AG04450 (cell line): ENCODE measurements at regions of chr3 and their contacts with region 1.

Region 1: GRCh38 chr3:123535580-123535979 is 49.3 kb downstream of the HACD2 start:
- DNase-seq: no peak
- H3K4me3 ChIP-seq: no peak overlapping the region
- H3K27ac ChIP-seq: no peak overlapping the region
- H3K27me3 ChIP-seq: no peaks in the 10 kb centered on the region
- CTCF ChIP-seq: no peak

Region 2: DNA sequence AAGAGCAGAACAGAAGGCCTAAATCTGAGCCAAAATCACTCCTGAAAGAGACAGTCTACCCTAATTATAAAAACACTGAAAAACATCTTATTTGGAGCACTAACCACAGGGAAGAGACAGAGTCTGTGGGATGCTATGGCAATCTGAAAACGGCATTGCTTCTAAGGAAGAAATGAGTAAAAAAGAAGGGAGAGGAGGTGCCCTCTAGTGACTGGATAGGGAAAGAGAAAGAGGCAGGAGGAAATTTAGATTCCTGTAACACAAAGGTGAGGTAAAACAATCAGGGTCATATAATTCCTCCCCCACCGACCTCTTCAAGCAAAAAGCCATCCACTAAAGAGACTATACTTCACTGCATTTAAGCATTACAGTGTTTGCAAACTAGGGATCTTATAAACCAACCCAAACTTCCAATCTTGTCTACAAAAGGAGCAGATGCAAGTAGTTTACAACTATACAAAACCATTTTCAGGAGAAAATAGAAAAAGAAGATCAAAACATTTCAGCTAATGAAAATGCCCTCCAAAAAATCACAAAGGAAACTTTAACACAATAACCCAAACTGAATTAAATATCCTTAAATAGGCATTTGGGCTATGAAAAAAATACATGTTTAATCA is 16.6 kb after region 1 on chr3:
- CTCF ChIA-PET with region 1: interaction called, 11 read pairs
- POLR2A ChIA-PET with region 1: no interaction called
- DNase-seq: no peak
- H3K4me3 ChIP-seq: no peak overlapping the region
- H3K27ac ChIP-seq: no peak overlapping the region
- H3K27me3 ChIP-seq: no peaks in the 10 kb centered on the region
- CTCF ChIP-seq: peak; percentile 71